GM12878 (cell line): ENCODE measurements at regions of chr10 and their contacts with region 1.

Region 1: DNA sequence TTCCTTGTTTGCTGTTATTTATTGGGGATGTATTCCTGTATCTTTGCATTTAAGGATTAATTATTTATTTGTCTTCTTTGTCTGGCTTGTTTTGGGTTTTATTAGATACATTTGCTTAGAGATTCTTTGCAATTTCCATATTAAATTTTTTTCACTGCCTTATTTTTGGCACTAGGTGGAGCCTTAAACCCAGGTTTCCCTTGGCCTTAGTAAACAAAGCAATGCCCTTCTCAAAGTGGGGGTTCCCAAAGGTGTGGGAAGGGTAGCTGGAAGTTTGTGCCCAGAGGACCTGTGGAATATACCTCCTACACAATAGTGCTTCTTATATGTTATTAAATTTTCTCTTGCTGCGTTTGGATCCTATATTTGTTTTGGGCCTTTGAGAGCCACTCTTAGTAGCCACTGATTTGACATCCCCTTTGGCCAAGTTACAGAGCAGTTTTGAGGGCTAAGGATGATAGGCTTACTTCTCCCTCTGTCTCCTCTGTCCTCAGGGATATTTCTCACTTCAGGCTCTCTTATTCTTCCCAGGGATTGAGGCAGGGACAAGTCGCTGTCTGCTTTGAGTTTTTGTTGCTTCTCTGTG is 162.3 kb downstream of the ITGB1 start:
- DNase-seq: peak; percentile 4
- ATAC-seq: peak; percentile 55; the same call in 1 of the 3 replicates
- H3K4me3 ChIP-seq: no peak overlapping the region
- H3K27ac ChIP-seq: no peak overlapping the region
- H3K4me1 ChIP-seq: no peaks in the 10 kb centered on the region
- H3K27me3 ChIP-seq: no peaks in the 10 kb centered on the region
- CTCF ChIP-seq: peak; percentile 50 to 78 (median 55); a peak in 4 of 6 replicates
- EP300 ChIP-seq: no peak
- POLR2A ChIP-seq: no peak
- RAD21 ChIP-seq: peak; percentile 98

Region 2: DNA sequence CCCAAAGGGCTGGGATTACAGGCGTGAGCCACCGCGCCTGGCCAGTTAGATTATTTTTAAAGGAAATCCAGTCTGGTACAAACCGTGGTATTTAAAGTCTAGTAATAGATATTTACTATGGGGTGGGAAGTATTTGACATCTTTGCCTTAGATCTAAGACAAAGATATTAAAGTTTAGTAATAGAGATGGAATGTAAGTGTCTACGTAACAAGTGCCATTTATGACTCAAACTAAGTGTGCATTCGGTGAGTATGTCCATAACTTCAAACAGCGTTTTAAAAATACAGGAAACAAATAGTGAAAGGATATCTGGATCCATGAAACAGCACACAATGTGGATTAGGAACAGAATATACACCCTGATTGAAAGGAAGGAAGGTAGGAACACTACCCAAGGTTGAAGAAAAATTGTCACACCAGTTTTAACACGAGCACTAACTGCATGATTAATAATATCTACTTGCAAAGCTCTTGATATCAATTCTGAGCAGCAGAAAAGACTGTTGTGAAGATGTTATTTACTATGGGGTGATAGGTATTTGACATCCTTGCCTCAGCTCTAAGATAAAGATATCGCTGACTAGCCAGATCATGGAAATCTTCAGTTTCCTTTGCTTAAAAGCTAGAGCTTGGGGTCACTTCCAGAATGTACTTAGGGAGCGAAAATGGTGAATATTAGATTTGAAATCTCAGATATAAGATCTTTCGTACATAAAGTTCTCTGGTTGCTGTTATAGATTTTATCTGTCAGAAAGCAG is 497.5 kb before region 1 on chr10:
- CTCF ChIA-PET with region 1: no interaction called
- POLR2A ChIA-PET with region 1: no interaction called
- RAD21 ChIA-PET with region 1: no interaction called
- SMC1A ChIA-PET with region 1: no interaction called
- in situ Hi-C with region 1: no loop called
- intact Hi-C with region 1: no loop called
- DNase-seq: no peak
- ATAC-seq: no peak
- H3K4me3 ChIP-seq: no peak overlapping the region
- H3K27ac ChIP-seq: no peak overlapping the region
- H3K4me1 ChIP-seq: no peaks in the 10 kb centered on the region
- H3K27me3 ChIP-seq: no peaks in the 10 kb centered on the region
- CTCF ChIP-seq: no peak
- EP300 ChIP-seq: no peak
- POLR2A ChIP-seq: no peak
- RAD21 ChIP-seq: no peak

Region 3: GRCh38 chr10:32751582-32751981 is 44.1 kb before region 1 on chr10:
- CTCF ChIA-PET with region 1: no interaction called
- POLR2A ChIA-PET with region 1: no interaction called
- RAD21 ChIA-PET with region 1: no interaction called
- SMC1A ChIA-PET with region 1: no interaction called
- in situ Hi-C with region 1: no loop called
- intact Hi-C with region 1: no loop called
- DNase-seq: no peak
- ATAC-seq: no peak
- H3K4me3 ChIP-seq: no peak overlapping the region
- H3K27ac ChIP-seq: no peak overlapping the region
- H3K4me1 ChIP-seq: no peaks in the 10 kb centered on the region
- H3K27me3 ChIP-seq: no peaks in the 10 kb centered on the region
- CTCF ChIP-seq: no peak
- EP300 ChIP-seq: no peak
- POLR2A ChIP-seq: no peak
- RAD21 ChIP-seq: no peak

Region 4: DNA sequence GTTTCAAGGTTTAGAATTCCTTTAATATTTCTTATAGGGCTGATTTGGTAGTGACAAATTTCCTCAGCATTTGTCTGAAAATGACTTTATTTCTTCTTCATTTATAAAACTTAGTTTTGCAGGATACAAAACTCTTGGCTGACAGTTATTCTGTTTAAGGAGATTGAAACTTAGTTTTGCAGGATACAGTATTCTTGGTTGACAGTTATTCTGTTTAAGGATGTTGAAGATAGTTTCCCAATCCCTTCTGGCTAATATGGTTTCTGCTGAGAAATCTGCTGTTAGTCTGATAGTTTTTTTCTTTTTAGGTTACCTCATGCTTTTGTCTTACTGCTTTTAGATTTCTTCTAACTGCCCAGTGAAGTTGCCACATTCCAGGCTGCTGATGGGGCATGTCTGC is 24.5 kb before region 1 on chr10:
- CTCF ChIA-PET with region 1: no interaction called
- POLR2A ChIA-PET with region 1: no interaction called
- RAD21 ChIA-PET with region 1: no interaction called
- SMC1A ChIA-PET with region 1: no interaction called
- in situ Hi-C with region 1: no loop called
- intact Hi-C with region 1: no loop called
- DNase-seq: no peak
- ATAC-seq: no peak
- H3K4me3 ChIP-seq: no peak overlapping the region
- H3K27ac ChIP-seq: no peak overlapping the region
- H3K4me1 ChIP-seq: no peaks in the 10 kb centered on the region
- H3K27me3 ChIP-seq: no peaks in the 10 kb centered on the region
- CTCF ChIP-seq: no peak
- EP300 ChIP-seq: no peak
- POLR2A ChIP-seq: no peak
- RAD21 ChIP-seq: no peak

Region 5: DNA sequence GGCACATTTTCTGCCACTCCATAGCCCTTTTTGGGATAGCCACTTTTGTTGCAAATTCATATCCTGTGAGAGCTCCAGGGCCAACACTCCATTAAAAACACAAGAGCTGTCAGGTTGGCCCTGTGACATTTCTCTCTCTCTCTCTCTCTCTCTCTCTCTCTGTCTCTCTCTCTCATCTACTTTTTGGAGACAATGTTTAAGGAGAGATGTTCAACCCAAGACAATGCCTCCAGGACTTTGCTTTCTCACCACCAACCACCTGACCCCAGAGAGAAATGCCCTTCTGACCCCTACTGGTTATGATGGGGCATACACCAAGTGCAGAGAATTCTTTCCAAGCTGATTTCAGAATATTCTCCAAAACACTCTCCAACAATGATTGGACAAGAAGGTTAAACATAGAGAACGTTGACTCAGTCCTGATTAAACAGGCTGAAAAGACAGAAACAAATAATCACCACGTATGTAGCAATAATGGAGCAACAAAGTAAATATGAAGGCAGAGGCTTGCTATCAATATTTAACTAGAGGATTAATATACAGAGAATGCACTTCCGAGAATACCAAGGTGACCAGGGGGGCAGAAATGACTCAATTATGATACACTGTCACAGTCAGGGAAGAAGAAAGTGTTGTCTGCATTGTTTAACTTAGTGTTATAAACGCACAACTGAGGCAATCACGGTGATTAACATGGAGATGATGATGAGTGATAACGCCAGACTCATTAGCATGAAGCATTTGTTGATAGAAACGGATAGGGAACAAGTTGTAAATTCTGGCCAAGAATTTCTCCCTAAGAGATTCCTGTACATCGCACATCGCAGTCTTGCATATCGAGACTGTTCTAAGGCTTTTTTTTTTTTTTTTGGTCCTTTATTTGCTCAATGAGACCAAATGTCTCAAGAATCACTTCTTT is 360.3 kb after region 1 on chr10:
- CTCF ChIA-PET with region 1: no interaction called
- POLR2A ChIA-PET with region 1: no interaction called
- RAD21 ChIA-PET with region 1: no interaction called
- SMC1A ChIA-PET with region 1: no interaction called
- in situ Hi-C with region 1: loop called (anchors 10 kb)
- intact Hi-C with region 1: loop called (anchors 5 kb)
- DNase-seq: no peak
- ATAC-seq: peak; percentile 85
- H3K4me3 ChIP-seq: no peak overlapping the region
- H3K27ac ChIP-seq: no peak overlapping the region
- H3K4me1 ChIP-seq: no peaks in the 10 kb centered on the region
- H3K27me3 ChIP-seq: no peaks in the 10 kb centered on the region
- CTCF ChIP-seq: peak; percentile 44 to 67 (median 54); a peak in 5 of 6 replicates
- EP300 ChIP-seq: no peak
- POLR2A ChIP-seq: no peak
- RAD21 ChIP-seq: peak; percentile 62

Region 6: DNA sequence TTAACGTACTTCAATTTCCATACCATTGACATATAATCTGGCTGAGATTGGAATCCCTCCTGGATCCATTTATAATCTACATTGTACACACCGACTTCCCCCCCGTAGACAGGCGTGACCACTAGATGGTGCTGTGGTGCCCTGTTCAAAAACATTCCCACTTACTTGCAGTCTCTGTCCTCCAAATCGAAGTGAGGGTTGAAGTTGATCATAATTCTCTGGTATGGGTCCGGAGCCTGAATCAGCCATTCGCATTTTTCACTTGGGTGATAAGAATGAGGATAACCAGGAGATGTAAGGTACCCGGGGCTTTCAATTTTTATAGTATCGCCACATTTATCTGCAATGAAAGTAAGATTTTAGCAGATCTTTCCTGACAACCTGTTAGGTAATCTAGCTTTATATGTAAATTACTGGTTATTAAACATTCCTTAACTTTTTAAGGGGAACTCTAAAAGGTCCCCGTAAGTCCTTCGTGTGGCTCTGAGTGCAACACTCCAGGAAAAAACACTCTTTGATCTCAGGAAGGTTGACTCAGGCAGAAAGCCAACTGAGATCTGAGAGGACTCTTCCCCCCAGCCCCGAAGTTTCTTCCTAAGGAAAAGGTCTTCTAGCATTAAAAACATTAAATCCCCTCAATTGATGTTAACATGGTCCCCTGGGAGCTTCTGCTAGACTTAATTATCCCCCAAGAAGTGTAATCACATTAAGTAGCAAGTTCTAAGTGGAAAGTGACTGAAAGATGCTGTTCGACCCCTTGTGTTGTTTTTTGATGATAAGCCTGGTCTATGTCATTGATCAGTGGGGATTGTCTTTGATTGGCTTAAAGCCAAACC is 535.1 kb after region 1 on chr10:
- CTCF ChIA-PET with region 1: no interaction called
- POLR2A ChIA-PET with region 1: no interaction called
- RAD21 ChIA-PET with region 1: no interaction called
- SMC1A ChIA-PET with region 1: no interaction called
- in situ Hi-C with region 1: no loop called
- intact Hi-C with region 1: no loop called
- DNase-seq: peak; percentile 13
- ATAC-seq: peak; percentile 70
- H3K4me3 ChIP-seq: no peak overlapping the region
- H3K27ac ChIP-seq: no peak overlapping the region
- H3K4me1 ChIP-seq: no peaks in the 10 kb centered on the region
- H3K27me3 ChIP-seq: peaks cover 3% of the 10 kb centered on the region in 2 experiments; a peak in 2 of 4 replicates
- CTCF ChIP-seq: peak; percentile 77 to 88 (median 87)
- EP300 ChIP-seq: no peak
- POLR2A ChIP-seq: no peak
- RAD21 ChIP-seq: peak; percentile 87